Gastrocnemius medialis (tissue), 4 donors: ENCODE measurements at regions of chr2 and their contacts with region 1.

Region 1: DNA sequence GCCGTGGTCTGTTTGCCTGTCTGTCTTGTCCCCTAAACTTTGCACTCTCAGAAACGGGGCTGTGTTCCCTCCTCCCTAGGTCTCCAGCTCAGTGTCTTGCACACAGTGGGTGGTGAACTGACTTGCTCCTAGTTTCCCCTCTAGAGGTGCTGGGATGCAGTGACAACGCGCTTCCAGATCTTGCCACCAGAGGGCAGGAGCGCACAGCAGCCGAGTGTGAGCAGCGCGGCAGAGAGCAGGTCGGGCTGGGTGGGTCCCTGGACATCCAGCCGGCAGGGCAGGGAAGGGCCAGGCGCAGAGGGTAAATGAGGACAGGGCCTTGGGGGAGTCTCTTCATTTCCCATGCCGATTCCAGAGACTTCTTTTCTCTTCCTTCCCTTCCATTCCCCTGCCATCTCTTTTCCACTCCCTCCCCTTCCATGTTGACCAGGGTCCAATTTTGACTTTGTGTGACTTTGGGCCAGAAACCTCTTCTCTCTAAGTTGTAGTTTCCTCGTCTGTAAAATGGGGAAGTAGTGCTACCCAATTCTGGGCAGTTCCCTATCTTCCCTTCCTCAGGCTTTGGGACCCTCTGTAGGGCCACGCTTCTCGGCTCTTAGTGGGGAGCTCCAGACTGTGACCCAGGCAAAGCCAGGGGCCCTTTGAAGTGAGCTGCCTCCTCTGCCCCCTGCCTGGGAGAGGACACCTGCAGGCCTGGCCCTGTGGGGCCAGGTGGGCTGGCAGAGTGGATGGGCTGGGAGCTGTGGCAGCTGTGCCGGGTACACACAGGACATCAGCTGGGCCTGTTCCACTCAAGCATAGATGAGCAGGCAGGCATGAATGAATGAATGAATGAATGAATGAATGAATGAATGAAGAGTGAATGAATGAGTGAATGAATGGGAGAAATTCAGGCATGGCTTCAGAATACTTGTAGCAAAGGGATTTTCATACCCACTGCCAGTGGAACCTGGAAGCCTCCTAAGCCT is 43.3 kb upstream of the TAF1B start:
- DNase-seq: peak; percentile 62 to 77
- ATAC-seq: peak; percentile 75 to 84
- H3K4me3 ChIP-seq: no peak overlapping the region
- H3K27ac ChIP-seq: peak overlapping the region in 2 of 4 donors; percentile 63 to 72
- H3K4me1 ChIP-seq: peaks cover 20 to 29% of the 10 kb centered on the region in 2 donors
- H3K27me3 ChIP-seq: no peaks in the 10 kb centered on the region
- CTCF ChIP-seq: peak; percentile 89 to 99 (median 92)
- POLR2A ChIP-seq: no peak

Region 2: GRCh38 chr2:9770308-9771100 is 29.4 kb before region 1 on chr2:
- in situ Hi-C with region 1: no loop called
- intact Hi-C with region 1: no loop called
- DNase-seq: peak; percentile 42 to 63
- ATAC-seq: peak; percentile 74 to 78
- H3K4me3 ChIP-seq: no peak overlapping the region
- H3K27ac ChIP-seq: peak overlapping the region; percentile 11 to 68 (median 37)
- H3K4me1 ChIP-seq: peaks cover 21 to 33% of the 10 kb centered on the region in 2 donors
- H3K27me3 ChIP-seq: no peaks in the 10 kb centered on the region
- CTCF ChIP-seq: peak; percentile 33 to 69 (median 63)
- POLR2A ChIP-seq: no peak

Region 3: DNA sequence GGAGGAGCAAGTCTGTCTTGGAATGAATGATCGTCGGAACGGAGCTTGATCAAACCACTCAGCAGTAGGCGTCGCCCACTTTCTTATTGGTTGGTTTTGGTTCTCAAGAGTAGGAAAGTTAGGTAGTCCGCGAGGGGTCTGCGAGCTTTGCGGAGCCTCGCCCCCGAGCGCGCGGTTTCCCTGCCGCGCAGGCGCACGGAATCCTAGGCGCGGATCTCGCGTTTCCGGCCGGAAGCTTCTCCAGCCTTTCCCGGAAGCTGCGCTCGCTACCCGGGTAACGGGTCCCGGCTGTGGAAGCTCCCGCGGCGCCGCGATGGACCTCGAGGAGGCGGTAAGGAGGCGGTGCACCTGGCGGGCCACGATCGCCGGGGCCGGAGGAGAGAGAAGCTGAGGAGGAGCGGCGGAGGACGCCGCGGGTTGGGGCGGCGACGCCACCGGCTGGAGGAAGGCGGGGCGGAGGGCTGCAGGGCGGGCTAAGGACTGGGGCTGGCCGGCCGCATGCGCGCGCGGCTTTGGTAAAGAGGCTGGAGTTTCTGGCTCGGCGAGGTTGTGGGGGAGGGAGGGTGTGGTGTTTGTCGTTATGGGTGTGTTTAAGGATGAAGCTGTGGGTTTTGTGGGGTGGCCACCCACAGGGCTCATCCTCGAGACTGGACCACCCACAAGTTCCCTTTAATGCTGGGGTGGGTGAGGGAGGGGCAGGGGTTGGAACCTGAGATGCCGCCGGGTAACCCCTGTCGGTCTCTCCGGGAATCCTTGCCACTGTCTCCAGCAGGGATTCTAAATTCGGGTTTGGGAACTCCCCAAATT is 43.5 kb after region 1 on chr2 and contains the start of gene TAF1B:
- in situ Hi-C with region 1: no loop called
- intact Hi-C with region 1: loop called (anchors 5 kb)
- DNase-seq: peak; percentile 61 to 81
- ATAC-seq: peak; percentile 93 to 94
- H3K4me3 ChIP-seq: peak within 1 kb of the TSS; percentile 74 to 97 (median 90)
- H3K27ac ChIP-seq: peak within 1 kb of the TSS; percentile 80 to 95 (median 88)
- H3K4me1 ChIP-seq: peaks cover 17 to 22% of the 10 kb centered on the region in 2 donors
- H3K27me3 ChIP-seq: no peaks in the 10 kb centered on the region
- CTCF ChIP-seq: peak in 1 of 5 experiments; percentile 25
- POLR2A ChIP-seq: peak; percentile 66 to 75
- total RNA-seq, gene TAF1B: 5.0 to 8.4 (median 7.3) TPM

Region 4: GRCh38 chr2:10398496-10398895 is 598.5 kb after region 1 on chr2:
- in situ Hi-C with region 1: no loop called
- intact Hi-C with region 1: no loop called
- DNase-seq: no peak
- ATAC-seq: peak in 1 of 2 donors; percentile 9
- H3K4me3 ChIP-seq: no peak overlapping the region
- H3K27ac ChIP-seq: peak overlapping the region in 3 of 4 donors; percentile 18 to 38 (median 37)
- H3K4me1 ChIP-seq: peaks cover 0 to 17% of the 10 kb centered on the region in 2 donors
- H3K27me3 ChIP-seq: no peaks in the 10 kb centered on the region
- CTCF ChIP-seq: no peak
- POLR2A ChIP-seq: no peak